Activated CD4-positive, alpha-beta T cell treated with anti-CD3 and anti-CD28 coated beads, Interleukin-2, amount 10 ng/mL, durations not matched to agents 24 days and 14 days (primary cell): ENCODE measurements at regions of chr1 and their contacts with region 1.

Region 1: GRCh38 chr1:65687428-65688214 is 105.1 kb upstream of the PDE4B start:
- DNase-seq: peak; percentile 93
- H3K4me3 Mint-ChIP-seq: no peak overlapping the region
- H3K27ac Mint-ChIP-seq: no peak overlapping the region
- H3K4me1 Mint-ChIP-seq: peaks cover 5% of the 10 kb centered on the region
- H3K27me3 Mint-ChIP-seq: peaks cover 26% of the 10 kb centered on the region

Region 2: GRCh38 chr1:64686828-64687724 is 1000.5 kb before region 1 on chr1:
- intact Hi-C with region 1: loop called (anchors 1 kb)
- DNase-seq: peak; percentile 70
- H3K4me3 Mint-ChIP-seq: no peak overlapping the region
- H3K27ac Mint-ChIP-seq: no peak overlapping the region
- H3K4me1 Mint-ChIP-seq: peaks cover 7% of the 10 kb centered on the region
- H3K27me3 Mint-ChIP-seq: peaks cover 4% of the 10 kb centered on the region

Region 3: GRCh38 chr1:65431111-65431705 is 256.4 kb before region 1 on chr1:
- intact Hi-C with region 1: loop called (anchors 2 kb)
- DNase-seq: peak; percentile 64
- H3K4me3 Mint-ChIP-seq: no peak overlapping the region
- H3K27ac Mint-ChIP-seq: no peak overlapping the region
- H3K4me1 Mint-ChIP-seq: peaks cover 14% of the 10 kb centered on the region
- H3K27me3 Mint-ChIP-seq: no peaks in the 10 kb centered on the region